T-cell (primary cell): ENCODE measurements at regions of chr11 and their contacts with region 1.

Region 1: GRCh38 chr11:75388386-75389275 is 10.7 kb upstream of the RPS3 start:
- DNase-seq: peak; percentile 39 to 86 (median 61)
- ATAC-seq: peak; percentile 81 to 86 (median 84)
- H3K4me3 ChIP-seq: no peak overlapping the region
- H3K4me3 Mint-ChIP-seq: no peak overlapping the region
- H3K27ac ChIP-seq: no peak overlapping the region
- H3K27ac Mint-ChIP-seq: no peak overlapping the region
- H3K4me1 ChIP-seq: peaks cover under 1 to 18% of the 10 kb centered on the region in 2 experiments
- H3K4me1 Mint-ChIP-seq: peaks cover 10 to 12% (median 12%) of the 10 kb centered on the region in 3 donors
- H3K27me3 ChIP-seq: peaks cover 0 to 19% of the 10 kb centered on the region in 2 experiments
- H3K27me3 Mint-ChIP-seq: peaks cover 0 to 1% of the 10 kb centered on the region in 2 donors

Region 2: GRCh38 chr11:74784234-74784633 is 604.4 kb before region 1 on chr11:
- CTCF ChIA-PET with region 1: no interaction called
- POLR2A ChIA-PET with region 1: no interaction called
- DNase-seq: peak in 2 of 35 experiments; percentile 1 to 26
- ATAC-seq: peak in 1 of 4 experiments; percentile 32
- H3K4me3 ChIP-seq: no peak overlapping the region
- H3K4me3 Mint-ChIP-seq: peak overlapping the region in 2 of 3 donors; percentile 7 to 68
- H3K27ac ChIP-seq: peak overlapping the region; percentile 61
- H3K27ac Mint-ChIP-seq: peak overlapping the region; percentile 58 to 69
- H3K4me1 ChIP-seq: peaks cover 23% of the 10 kb centered on the region in 2 experiments
- H3K4me1 Mint-ChIP-seq: peaks cover under 1 to 27% (median 22%) of the 10 kb centered on the region in 3 donors
- H3K27me3 ChIP-seq: no peaks in the 10 kb centered on the region
- H3K27me3 Mint-ChIP-seq: no peaks in the 10 kb centered on the region

Region 3: GRCh38 chr11:75133976-75134375 is 254.7 kb before region 1 on chr11:
- CTCF ChIA-PET with region 1: no interaction called
- POLR2A ChIA-PET with region 1: no interaction called
- DNase-seq: no peak
- ATAC-seq: no peak
- H3K4me3 ChIP-seq: no peak overlapping the region
- H3K4me3 Mint-ChIP-seq: no peak overlapping the region
- H3K27ac ChIP-seq: no peak overlapping the region
- H3K27ac Mint-ChIP-seq: no peak overlapping the region
- H3K4me1 ChIP-seq: no peaks in the 10 kb centered on the region
- H3K4me1 Mint-ChIP-seq: no peaks in the 10 kb centered on the region
- H3K27me3 ChIP-seq: peaks cover 4 to 17% of the 10 kb centered on the region in 2 experiments
- H3K27me3 Mint-ChIP-seq: peaks cover 27 to 28% of the 10 kb centered on the region in 2 donors

Region 4: DNA sequence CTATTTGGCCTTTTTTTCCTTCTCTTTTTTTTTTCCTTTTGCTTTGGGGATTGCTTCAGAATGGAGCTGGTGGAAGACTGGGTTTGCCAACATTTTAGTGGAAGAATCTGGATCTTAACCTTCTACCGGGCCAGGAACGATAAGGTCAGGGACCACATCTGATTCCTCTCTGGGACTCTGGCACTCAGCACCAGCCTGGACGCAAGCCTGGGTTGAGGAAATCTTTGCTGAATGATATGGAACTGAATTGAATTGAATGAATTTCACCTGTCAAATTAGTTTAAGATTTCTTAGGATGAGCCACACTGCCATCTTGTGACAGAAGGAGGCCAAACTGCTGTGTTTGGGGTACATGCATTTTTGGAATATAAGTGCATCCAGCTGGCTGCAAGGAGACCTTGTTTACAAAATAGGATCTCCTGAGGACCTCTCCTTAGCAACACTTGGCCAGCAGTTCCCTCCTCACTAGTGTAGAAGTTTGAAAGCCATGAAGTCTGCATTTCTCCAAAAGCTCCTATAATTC is 117.7 kb before region 1 on chr11:
- CTCF ChIA-PET with region 1: interaction called, 8 to 32 read pairs
- POLR2A ChIA-PET with region 1: interaction called in 1 of 2 experiments, 5 read pairs
- DNase-seq: peak in 16 of 35 experiments; percentile 6 to 61 (median 27)
- ATAC-seq: no peak
- H3K4me3 ChIP-seq: no peak overlapping the region
- H3K4me3 Mint-ChIP-seq: peak overlapping the region in 1 of 3 donors; percentile 37
- H3K27ac ChIP-seq: no peak overlapping the region
- H3K27ac Mint-ChIP-seq: peak overlapping the region; percentile 97 to 99
- H3K4me1 ChIP-seq: peaks cover 25 to 45% of the 10 kb centered on the region in 2 experiments
- H3K4me1 Mint-ChIP-seq: peaks cover 35 to 48% (median 37%) of the 10 kb centered on the region in 3 donors
- H3K27me3 ChIP-seq: no peaks in the 10 kb centered on the region
- H3K27me3 Mint-ChIP-seq: no peaks in the 10 kb centered on the region

Region 5: DNA sequence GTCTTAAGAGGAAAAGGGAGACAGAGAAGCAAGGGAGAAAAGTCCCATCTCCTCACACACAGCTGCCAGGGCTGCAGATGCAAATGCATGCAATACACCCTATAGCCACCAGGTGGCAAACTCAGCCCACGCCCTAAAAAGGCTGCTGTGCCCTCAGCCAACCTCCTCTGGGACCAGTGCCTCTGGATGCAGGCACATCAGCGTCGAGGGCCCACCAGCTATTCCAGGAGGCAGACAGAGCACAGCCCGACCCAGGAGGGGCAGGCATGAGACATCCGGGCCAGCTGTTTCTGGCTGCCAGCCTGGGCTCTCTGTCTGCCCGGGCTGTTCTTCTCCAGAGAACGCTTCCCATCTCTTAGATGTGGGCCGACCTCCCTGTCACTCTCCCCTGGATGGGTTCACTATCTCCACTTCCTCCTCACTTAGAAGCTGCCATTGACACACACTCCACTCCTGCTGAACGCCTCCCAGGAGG is 108.4 kb before region 1 on chr11:
- CTCF ChIA-PET with region 1: interaction called, 21 to 38 read pairs
- POLR2A ChIA-PET with region 1: interaction called in 1 of 2 experiments, 4 read pairs
- DNase-seq: peak; percentile 41 to 88 (median 68)
- ATAC-seq: peak; percentile 26 to 54 (median 34)
- H3K4me3 ChIP-seq: no peak overlapping the region
- H3K4me3 Mint-ChIP-seq: peak overlapping the region in 1 of 3 donors; percentile 49
- H3K27ac ChIP-seq: no peak overlapping the region
- H3K27ac Mint-ChIP-seq: peak overlapping the region; percentile 91 to 95
- H3K4me1 ChIP-seq: peaks cover 27 to 49% of the 10 kb centered on the region in 2 experiments
- H3K4me1 Mint-ChIP-seq: peaks cover 41 to 51% (median 45%) of the 10 kb centered on the region in 3 donors
- H3K27me3 ChIP-seq: no peaks in the 10 kb centered on the region
- H3K27me3 Mint-ChIP-seq: no peaks in the 10 kb centered on the region

Region 6: GRCh38 chr11:75342903-75343870 is 45.4 kb before region 1 on chr11:
- CTCF ChIA-PET with region 1: no interaction called
- POLR2A ChIA-PET with region 1: no interaction called
- DNase-seq: no peak
- ATAC-seq: no peak
- H3K4me3 ChIP-seq: no peak overlapping the region
- H3K4me3 Mint-ChIP-seq: peak overlapping the region in 1 of 3 donors; percentile 47
- H3K27ac ChIP-seq: peak overlapping the region; percentile 11
- H3K27ac Mint-ChIP-seq: peak overlapping the region; percentile 78 to 97
- H3K4me1 ChIP-seq: peaks cover 71 to 97% of the 10 kb centered on the region in 2 experiments
- H3K4me1 Mint-ChIP-seq: peaks cover 98 to 100% (median 98%) of the 10 kb centered on the region in 3 donors
- H3K27me3 ChIP-seq: no peaks in the 10 kb centered on the region
- H3K27me3 Mint-ChIP-seq: no peaks in the 10 kb centered on the region

Region 7: DNA sequence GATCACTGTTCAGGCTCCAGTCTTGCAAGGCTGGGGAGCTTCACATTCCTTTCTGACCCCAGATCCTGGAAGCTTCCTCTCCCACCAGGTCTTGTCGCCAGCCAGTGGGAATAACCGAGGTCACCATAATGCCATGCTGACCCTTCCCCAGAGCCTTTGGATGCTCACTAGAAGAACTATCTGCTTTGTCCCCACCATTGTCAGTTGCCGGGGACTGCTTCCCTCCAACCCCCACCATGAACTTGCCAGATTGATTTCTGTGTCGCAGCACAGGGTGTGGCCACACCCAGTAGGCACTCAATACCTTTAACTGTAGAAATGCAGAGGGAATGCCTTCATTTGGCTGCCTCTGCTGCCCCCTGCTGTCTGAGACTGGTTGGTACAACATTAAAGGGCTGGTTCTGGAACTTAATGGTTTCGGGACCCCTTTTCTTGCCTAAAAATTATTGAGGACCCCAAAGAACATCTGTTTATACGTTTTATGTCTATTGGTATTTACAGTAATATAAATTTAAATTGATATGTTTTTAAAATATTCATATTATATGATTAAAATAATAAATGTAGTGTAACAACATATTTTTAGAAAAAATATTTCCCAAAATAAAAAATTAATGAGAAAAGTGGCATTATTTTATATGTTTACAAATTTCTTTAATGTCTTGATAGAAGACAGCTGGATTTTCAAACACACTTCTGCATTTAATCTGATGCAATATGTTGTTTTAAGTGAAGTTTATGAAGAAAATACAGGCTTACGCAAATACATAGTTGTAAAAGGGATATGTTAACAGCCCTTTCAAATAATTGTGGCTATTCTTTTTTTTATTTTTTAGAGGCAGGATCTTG is 143.8 kb after region 1 on chr11:
- CTCF ChIA-PET with region 1: interaction called, 5 to 14 read pairs
- POLR2A ChIA-PET with region 1: no interaction called
- DNase-seq: peak; percentile 51 to 90 (median 76)
- ATAC-seq: peak; percentile 74 to 93 (median 89)
- H3K4me3 ChIP-seq: no peak overlapping the region
- H3K4me3 Mint-ChIP-seq: no peak overlapping the region
- H3K27ac ChIP-seq: no peak overlapping the region
- H3K27ac Mint-ChIP-seq: no peak overlapping the region
- H3K4me1 ChIP-seq: peaks cover 3 to 44% of the 10 kb centered on the region in 2 experiments
- H3K4me1 Mint-ChIP-seq: peaks cover 28 to 54% (median 33%) of the 10 kb centered on the region in 3 donors
- H3K27me3 ChIP-seq: no peaks in the 10 kb centered on the region
- H3K27me3 Mint-ChIP-seq: peaks cover 0 to under 1% of the 10 kb centered on the region in 2 donors